A673 (cell line): ENCODE measurements at regions of chr15 and their contacts with region 1.

Region 1: GRCh38 chr15:45022871-45023658 is at the start of gene SORD:
- DNase-seq: peak; percentile 96
- H3K4me3 ChIP-seq: peak within 1 kb of the TSS; percentile 92
- H3K27ac ChIP-seq: peak within 1 kb of the TSS; percentile 92
- H3K4me1 ChIP-seq: peaks cover 20% of the 10 kb centered on the region
- H3K27me3 ChIP-seq: no peaks in the 10 kb centered on the region
- CTCF ChIP-seq: no peak
- total RNA-seq, gene SORD: 252 and 286 TPM in 2 replicates

Region 2: DNA sequence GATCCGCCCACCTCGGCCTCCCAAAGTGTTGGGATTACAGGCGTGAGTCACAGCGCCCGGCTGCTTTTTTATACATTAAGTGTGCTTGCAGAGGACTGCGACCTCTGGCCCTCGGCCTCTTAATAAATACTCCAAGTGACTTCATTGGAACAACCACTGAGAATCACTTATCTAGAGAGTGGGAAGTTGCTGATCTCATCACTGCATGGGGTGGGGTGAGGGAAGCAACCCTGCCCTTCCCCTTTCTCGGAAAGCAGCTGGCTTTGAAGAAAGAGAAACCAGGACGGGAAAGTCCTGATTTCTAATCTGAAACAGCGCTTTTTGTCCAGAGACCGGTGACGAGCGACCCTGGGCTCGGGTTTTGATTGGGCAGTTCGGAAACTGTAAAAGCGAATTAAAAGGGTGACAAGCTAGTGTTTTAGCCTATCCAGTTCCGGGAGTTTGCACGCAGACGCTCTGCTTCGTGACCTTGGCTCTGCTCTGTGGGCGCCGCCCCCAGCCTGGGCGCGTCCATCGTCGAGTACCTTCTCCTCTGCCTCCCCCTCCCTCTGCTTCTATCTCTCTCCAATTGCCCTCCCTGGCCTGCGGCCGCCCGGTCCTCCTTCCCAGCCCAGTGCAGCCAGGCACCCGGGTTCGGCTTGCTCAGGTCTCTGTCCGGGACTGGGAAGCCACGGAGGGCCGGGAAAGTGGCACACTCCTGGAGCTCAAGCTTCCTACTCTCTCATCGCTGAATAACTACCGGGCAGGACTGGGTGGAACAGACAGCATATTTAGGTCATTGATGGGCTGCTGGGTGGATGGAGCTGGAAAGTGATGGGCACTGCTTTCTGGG is 294.3 kb before region 1 on chr15:
- CTCF ChIA-PET with region 1: no interaction called
- POLR2A ChIA-PET with region 1: no interaction called
- intact Hi-C with region 1: loop called (anchors 10 kb)
- DNase-seq: peak; percentile 99
- H3K4me3 ChIP-seq: peak overlapping the region; percentile 81
- H3K27ac ChIP-seq: peak overlapping the region; percentile 95
- H3K4me1 ChIP-seq: peaks cover 42% of the 10 kb centered on the region
- H3K27me3 ChIP-seq: no peaks in the 10 kb centered on the region
- CTCF ChIP-seq: no peak